ENCODE measurements at regions of chr6 and their contacts with region 1.

Region 1: DNA sequence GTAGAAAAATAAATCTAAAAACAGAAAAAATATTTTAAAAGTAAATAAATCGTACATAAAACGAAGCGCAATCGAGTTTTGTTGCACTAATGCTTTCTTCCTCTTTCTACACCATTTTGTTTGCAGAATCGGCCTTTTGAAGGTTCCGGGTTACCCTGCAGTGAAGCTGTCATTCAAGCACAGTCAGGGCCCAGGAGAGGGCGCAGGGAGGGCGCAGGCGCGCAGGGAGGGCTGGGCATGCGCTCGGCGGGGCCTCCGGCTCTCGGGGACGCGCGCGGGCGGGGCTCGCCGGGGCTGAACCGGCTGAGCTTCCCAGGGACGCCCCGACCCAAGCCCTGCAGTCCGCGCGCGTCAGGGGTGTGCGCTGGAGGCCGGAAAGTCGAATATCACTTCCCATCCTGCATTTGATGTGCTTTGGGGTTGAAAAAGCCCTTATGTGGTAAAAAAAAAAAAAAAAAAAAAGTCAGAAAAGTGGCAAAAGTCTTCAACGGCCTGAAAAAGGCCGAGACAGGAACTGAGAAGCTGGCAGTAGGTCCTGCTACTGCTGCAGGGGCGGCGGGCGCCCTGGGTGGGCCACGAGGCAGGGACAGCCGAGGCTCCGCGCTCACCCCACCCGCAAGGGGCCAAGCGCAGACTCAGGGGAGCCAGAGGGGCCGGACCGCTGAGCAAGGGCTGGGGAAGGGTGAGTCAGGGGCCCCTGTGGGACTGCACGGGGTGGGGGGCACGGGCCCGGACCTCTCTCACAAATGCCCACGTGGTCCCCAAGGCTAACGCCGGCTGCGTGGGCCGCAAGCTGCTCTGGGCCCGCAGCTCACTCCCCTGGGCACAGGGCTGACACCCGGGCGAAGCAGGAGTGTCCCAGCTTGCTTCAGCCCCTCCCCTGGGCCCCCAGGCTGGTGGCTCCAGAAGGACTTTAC is 40.5 kb downstream of the THBS2 start:
- DNase-seq: peak; percentile 48 to 97 (median 89)
- H3K4me3 ChIP-seq: peak overlapping the region; percentile 25 to 69 (median 50)
- H3K27ac ChIP-seq: peak overlapping the region; percentile 66 to 96 (median 90)
- H3K27me3 ChIP-seq: peaks cover 0 to 3% (median 0%) of the 10 kb centered on the region in 45 donors
- CTCF ChIP-seq: peak in 55 of 56 donors; percentile 41 to 86 (median 68)

Region 2: GRCh38 chr6:169188475-169188874 is 24.7 kb before region 1 on chr6:
- intact Hi-C with region 1: no loop called
- DNase-seq: no peak
- H3K4me3 ChIP-seq: no peak overlapping the region
- H3K27ac ChIP-seq: no peak overlapping the region
- H3K27me3 ChIP-seq: no peaks in the 10 kb centered on the region
- CTCF ChIP-seq: no peak

Region 3: DNA sequence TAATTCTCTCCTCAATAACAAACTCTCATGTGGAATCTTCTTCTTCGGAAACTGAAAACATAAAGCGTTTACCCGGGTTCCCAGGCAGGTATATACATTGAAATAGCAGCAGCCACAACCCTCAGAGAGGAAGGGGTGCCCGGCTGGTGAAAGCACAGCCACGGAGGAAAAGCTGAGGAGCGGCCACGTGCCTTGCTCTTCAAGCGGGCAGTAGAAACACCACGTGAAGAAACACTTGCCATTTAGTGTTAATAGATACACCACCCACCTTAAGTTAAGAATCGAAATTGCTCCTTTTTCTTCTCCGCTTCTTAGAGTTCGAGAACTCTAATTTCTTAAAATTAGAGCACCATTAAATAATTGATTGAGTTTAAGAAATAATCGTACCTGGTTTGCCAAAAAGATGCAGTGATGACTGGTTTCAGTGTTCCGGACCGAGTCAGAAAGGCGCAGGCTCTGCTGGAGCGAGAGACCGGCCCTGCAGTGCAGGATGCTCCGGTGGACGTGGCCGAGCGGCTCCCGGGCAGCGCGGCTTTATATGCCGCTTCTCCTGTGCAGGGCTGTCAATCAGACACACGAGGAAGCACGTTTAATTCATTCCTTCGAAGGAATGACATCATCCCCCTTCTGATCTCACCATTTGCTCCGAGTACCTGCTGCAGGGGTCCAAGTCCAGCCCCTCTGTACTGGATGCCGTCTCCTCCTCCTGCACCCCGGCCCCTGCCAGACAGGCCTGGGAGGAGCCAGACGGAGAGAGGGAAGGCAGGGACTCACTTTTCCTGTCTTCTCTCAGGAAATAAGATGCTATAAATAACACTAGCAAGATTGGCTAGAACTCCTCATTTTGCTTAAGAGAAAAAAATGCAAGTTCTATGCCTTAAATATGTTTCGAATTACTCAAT is 40.4 kb after region 1 on chr6 and contains the start of gene THBS2:
- intact Hi-C with region 1: loop called (anchors 5 kb)
- DNase-seq: peak in 2 of 10 donors; percentile 33 to 51
- H3K4me3 ChIP-seq: peak within 1 kb of the TSS; percentile 12 to 69 (median 52)
- H3K27ac ChIP-seq: peak within 1 kb of the TSS in 53 of 59 donors; percentile 2 to 97 (median 88)
- H3K27me3 ChIP-seq: peaks cover 0 to 14% (median 0%) of the 10 kb centered on the region in 45 donors
- CTCF ChIP-seq: no peak
- total RNA-seq, gene THBS2: 9.6 to 96.0 (median 23.8) TPM

Region 4: DNA sequence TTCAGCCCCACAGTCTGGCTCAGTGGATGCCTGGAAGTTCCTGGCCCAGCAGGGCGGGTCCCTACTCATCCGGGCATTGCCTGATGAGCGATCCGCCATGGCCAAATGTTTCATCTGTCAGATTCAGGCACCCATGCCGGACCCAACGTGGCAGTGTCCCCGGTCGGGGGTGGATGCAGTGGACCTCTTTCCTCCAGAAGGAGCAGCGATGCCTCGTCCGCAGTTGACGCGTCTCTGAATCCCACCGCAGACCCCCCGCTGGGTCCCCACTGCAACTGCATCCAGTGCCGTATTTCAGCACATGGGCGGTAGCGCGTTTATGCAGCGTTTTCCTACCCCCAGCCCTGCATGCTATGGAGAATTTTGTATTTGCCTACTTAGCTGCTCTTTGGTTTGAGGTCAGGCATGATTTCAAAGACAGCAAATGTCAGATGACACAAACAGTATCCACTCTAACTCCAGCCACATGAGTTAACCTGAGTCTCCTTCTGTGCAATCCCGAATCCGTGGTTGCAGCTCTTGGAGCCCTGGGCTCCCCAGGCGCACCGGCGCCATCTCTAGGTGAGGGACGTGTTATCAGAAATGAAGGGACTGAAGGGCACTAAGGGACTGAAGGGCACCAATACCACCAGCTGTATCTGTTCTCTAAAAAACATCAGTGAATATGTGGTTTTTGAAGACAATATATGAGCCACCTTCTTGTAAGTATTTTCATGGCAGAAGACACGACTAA is 113.1 kb after region 1 on chr6:
- intact Hi-C with region 1: loop called in 1 of 2 experiments (anchors 5 kb)
- DNase-seq: peak in 6 of 10 donors; percentile 25 to 75 (median 44)
- H3K4me3 ChIP-seq: no peak overlapping the region
- H3K27ac ChIP-seq: no peak overlapping the region
- H3K27me3 ChIP-seq: peaks cover 0 to 5% (median 0%) of the 10 kb centered on the region in 45 donors
- CTCF ChIP-seq: peak in 52 of 56 donors; percentile 18 to 73 (median 45)

Measured in dorsolateral prefrontal cortex (tissue), 120 donors.